ENCODE measurements at regions of chr5 and their contacts with region 1.

Region 1: DNA sequence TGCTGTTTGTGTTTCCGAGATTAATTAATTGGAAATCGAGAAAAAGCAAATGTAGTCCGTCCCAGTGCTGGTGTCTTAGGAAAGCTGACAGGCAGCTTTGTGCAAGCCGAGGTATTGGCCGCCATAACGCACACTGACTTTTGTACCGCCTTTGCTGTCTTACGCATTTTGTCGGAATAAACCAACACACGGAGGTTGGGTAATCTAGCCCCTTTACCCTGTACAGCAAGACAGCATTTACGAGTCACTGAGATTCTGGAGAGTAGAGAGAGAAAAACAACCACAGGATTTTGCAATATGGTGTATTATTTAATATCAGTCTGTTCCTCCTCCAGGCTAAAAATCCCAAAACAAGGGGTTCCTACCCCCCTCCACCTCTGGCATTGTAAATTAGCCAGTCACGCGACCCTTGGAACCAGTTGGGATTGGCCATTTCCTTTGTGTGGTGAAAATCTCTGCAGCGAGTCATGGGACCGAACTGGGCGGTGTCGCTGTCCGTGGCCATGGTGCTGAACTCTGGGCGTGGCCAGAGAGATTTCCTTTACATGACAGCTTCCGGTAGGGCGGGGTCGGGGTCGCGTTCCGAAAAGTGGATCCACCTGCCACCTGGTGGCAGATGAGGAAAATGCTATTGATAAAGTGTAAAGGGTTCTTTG is 10.3 kb upstream of the PCDHB1 start:
- H3K4me3 ChIP-seq: peak overlapping the region; percentile 32
- H3K27ac ChIP-seq: peak overlapping the region; percentile 25; the same call in 1 of the 2 replicates
- H3K4me1 ChIP-seq: peaks cover 14% of the 10 kb centered on the region
- CTCF ChIP-seq: no peak

Region 2: GRCh38 chr5:140855772-140856674 is 184.9 kb before region 1 on chr5 and contains the start of gene PCDHA10:
- CTCF ChIA-PET with region 1: interaction called, 20 read pairs
- POLR2A ChIA-PET with region 1: no interaction called
- H3K4me3 ChIP-seq: peak within 1 kb of the TSS; percentile 10
- H3K27ac ChIP-seq: no peak within 1 kb of the TSS
- H3K4me1 ChIP-seq: no peaks in the 10 kb centered on the region
- CTCF ChIP-seq: no peak

Region 3: DNA sequence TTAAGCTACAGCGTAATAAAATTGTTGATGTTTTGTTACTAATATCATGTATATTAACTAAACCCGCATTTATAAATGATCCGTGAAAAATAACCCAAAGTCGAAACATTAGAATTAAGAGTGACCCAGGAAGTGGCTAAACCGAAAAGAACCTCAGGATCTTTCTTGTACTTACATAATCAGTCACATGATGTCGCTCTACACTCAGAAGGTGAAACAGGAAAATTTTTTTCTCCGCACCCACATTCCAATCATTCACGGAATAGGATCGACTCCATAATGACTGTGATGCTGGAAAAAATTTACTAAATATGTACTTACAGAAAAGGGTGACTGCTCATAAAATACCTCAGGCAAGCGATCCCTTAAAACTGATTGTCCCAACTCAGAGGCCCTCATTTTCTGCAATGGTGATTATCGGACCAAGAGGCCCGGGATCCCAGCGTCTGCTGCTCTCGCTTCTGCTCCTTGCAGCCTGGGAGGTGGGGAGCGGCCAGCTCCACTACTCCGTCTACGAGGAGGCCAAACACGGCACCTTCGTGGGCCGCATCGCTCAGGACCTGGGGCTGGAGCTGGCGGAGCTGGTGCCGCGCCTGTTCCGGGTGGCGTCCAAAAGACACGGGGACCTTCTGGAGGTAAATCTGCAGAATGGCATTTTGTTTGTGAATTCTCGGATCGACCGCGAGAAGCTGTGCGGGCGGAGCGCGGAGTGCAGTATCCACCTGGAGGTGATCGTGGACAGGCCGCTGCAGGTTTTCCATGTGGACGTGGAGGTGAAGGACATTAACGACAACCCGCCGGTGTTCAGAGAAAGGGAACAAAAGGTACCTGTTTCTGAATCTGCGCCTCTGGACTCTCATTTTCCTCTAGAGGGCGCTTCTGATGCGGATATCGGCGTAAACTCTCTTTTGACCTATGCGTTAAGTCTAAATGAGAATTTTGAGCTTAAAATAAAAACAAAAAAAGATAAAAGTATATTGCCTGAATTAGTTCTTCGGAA is 165.5 kb before region 1 on chr5 and contains the start of gene PCDHA12:
- CTCF ChIA-PET with region 1: interaction called, 81 read pairs
- POLR2A ChIA-PET with region 1: no interaction called
- H3K4me3 ChIP-seq: no peak within 1 kb of the TSS
- H3K27ac ChIP-seq: no peak within 1 kb of the TSS
- H3K4me1 ChIP-seq: no peaks in the 10 kb centered on the region
- CTCF ChIP-seq: no peak

Region 4: DNA sequence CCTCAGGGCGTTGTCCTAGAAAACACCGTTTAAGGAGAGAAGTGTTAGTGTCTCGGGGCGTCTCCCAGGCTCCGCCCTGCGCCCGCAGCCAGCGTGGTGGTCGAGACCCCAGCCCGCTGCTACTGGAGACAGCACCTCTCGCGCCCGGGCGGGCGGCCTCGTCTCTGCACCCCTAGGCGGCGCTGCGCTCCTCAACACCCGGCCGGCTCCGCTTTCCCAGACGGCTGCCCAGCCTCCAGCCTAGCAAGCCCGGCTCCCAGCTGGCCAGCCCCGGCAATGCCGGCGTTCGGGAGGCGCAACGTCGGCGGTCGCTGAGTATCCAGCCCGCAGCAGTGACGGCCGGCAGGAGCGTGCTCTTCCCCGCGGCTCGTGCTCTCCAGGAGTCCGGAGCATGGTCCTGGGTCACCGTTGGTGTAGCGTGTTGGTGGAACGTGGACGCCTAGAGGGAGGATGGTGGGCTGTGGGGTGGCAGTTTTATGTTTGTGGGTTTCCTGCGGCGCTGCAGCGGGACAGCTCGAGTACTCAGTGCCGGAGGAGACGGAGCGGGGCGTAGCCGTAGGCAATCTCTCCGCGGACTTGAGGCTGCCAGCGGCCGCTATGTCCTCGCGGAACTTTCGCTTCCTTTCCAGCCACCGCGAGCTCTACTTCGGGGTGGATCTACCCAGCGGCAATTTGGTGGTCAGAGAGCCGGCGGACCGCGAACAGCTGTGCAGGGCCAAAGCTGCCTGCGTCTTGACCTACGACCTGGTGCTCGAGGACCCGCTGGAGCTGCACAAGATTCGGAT is 114.3 kb before region 1 on chr5:
- CTCF ChIA-PET with region 1: interaction called, 35 read pairs
- POLR2A ChIA-PET with region 1: interaction called, 3 read pairs
- H3K4me3 ChIP-seq: peak overlapping the region; percentile 52
- H3K27ac ChIP-seq: no peak overlapping the region
- H3K4me1 ChIP-seq: no peaks in the 10 kb centered on the region
- CTCF ChIP-seq: peak; percentile 75; the same call in 1 of the 2 replicates

Region 5: GRCh38 chr5:141094481-141095262 is 53.8 kb after region 1 on chr5 and contains the start of gene PCDHB2:
- CTCF ChIA-PET with region 1: no interaction called
- POLR2A ChIA-PET with region 1: no interaction called
- H3K4me3 ChIP-seq: peak within 1 kb of the TSS; percentile 55
- H3K27ac ChIP-seq: no peak within 1 kb of the TSS
- H3K4me1 ChIP-seq: no peaks in the 10 kb centered on the region
- CTCF ChIP-seq: no peak

Measured in HEK293 (cell line).